Spleen (tissue), 13 donors: ENCODE measurements at regions of chr1 and their contacts with region 1.

Region 1: DNA sequence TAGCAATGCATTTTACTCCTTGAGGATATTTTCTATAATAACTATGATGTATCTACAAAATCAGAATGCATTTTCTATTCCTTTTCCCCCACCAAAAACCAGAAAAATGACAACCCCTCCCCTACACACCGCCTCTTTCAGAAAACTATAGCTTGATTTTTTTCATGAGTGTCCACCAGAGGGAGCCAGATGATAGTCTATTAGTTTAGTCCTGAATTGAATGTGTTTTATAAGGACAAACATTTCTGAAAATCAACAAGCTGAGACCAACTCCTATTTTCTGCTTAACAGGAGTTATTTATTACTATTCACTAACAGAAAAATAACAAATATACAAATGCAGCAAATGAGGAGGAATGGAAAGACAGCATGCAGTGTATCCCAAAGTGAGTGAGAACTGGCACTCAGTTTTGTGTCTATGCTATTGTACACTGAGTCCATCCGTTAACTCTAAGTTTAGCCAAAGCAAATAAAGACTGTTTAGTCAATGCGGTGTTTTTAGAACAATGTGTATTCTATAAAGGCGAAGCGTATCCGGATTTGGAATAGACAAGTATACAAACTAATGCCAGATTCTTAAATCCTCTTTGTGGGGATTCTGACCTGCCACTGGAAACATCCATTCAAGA is 182.6 kb downstream of the VAV3 start:
- DNase-seq: no peak
- H3K4me3 ChIP-seq: no peak overlapping the region
- H3K27ac ChIP-seq: peak overlapping the region in 2 of 8 donors; percentile 8 to 9
- H3K4me1 ChIP-seq: peaks cover 23 to 67% (median 44%) of the 10 kb centered on the region in 6 donors
- H3K27me3 ChIP-seq: no peaks in the 10 kb centered on the region
- CTCF ChIP-seq: peak; percentile 40 to 86 (median 71)
- POLR2A ChIP-seq: no peak

Region 2: GRCh38 chr1:107963601-107964335 is 181.4 kb after region 1 on chr1:
- intact Hi-C with region 1: loop called (anchors 10 kb)
- DNase-seq: peak; percentile 89
- H3K4me3 ChIP-seq: peak overlapping the region; percentile 61 to 99 (median 87)
- H3K27ac ChIP-seq: peak overlapping the region; percentile 85 to 96 (median 93)
- H3K4me1 ChIP-seq: peaks cover 17 to 70% (median 32%) of the 10 kb centered on the region in 6 donors
- H3K27me3 ChIP-seq: no peaks in the 10 kb centered on the region
- CTCF ChIP-seq: no peak
- POLR2A ChIP-seq: peak in 1 of 3 donors; percentile 6

Region 3: DNA sequence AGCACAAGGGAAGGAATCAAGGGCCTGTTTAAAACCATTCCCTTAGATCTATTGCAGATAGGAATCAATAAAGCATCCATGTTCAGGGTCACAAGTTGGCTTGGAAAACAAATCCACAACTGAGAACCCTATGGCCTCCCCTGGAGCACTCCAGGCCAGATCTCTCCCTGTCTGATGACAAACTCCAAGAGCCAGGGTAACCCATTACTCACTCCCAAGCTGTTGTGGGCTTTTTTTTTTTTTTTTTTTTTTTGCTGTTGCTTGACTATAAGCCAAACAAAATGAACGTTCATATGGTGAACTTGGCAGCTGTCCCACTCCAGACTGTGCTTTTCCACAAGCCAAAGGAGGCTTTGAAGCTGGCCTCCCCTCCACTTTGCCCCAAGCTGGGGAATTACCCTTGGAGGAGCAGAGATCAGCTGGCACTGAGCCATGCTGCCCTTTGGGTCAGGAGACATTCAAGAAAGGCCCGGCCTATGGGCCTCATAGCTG is 218.3 kb after region 1 on chr1:
- intact Hi-C with region 1: no loop called
- DNase-seq: no peak
- H3K4me3 ChIP-seq: no peak overlapping the region
- H3K27ac ChIP-seq: peak overlapping the region in 1 of 8 donors; percentile 13
- H3K4me1 ChIP-seq: peaks cover 0 to 7% (median 0%) of the 10 kb centered on the region in 6 donors
- H3K27me3 ChIP-seq: no peaks in the 10 kb centered on the region
- CTCF ChIP-seq: no peak
- POLR2A ChIP-seq: no peak

Region 4: DNA sequence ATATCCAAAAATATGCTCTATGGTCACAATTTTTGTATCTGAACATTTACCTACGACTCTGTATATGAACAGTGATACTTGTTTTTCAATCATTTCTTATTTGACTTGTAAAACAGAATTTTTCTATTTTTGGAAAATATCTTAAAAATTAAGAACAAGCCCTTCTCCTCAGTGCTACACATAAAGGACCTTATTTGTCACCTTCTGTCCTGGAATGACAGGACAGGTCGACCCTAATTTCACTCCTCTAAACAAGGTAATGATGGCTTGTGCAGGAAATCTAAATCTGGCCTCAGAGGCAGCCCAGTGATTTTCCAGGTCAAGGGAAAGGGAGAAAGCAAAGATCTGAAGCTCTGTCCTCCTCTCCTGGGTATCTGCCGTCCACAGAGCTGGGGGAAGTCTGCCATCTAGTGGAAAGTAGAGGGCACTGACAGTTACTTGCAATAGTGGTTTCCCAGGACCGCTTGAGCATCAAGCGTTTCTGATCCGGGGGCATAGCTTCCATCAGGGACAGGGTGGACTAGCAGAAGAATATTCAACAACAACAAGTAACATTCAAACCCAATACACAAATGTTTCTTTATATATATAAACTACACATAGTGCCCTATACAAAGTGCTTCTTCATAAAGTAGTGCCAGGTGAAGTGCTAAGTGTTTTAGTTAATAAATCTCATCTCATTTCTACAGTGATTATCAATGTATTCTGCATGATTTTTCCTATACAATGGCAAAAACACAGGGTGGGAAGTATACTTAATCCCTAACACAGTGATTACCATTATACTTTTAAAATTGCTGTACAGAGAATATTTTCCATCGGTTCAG is 343.2 kb after region 1 on chr1:
- intact Hi-C with region 1: loop called (anchors 2 kb)
- DNase-seq: peak; percentile 83
- H3K4me3 ChIP-seq: no peak overlapping the region
- H3K27ac ChIP-seq: no peak overlapping the region
- H3K4me1 ChIP-seq: peaks cover 7 to 14% (median 10%) of the 10 kb centered on the region in 6 donors
- H3K27me3 ChIP-seq: no peaks in the 10 kb centered on the region
- CTCF ChIP-seq: peak; percentile 82 to 97 (median 93)
- POLR2A ChIP-seq: no peak

Region 5: GRCh38 chr1:108141621-108142020 is 359.3 kb after region 1 on chr1:
- intact Hi-C with region 1: no loop called
- DNase-seq: no peak
- H3K4me3 ChIP-seq: no peak overlapping the region
- H3K27ac ChIP-seq: peak overlapping the region in 3 of 8 donors; percentile 4 to 25 (median 7)
- H3K4me1 ChIP-seq: peaks cover 0 to 17% (median 0%) of the 10 kb centered on the region in 6 donors
- H3K27me3 ChIP-seq: no peaks in the 10 kb centered on the region
- CTCF ChIP-seq: no peak
- POLR2A ChIP-seq: no peak